PC-9 (cell line): ENCODE measurements at regions of chr2 and their contacts with region 1.

Region 1: GRCh38 chr2:44981136-44982108 is 27.8 kb downstream of the SIX2 start:
- DNase-seq: peak; percentile 62 to 76
- H3K4me3 ChIP-seq: no peak overlapping the region
- H3K27ac ChIP-seq: no peak overlapping the region
- H3K4me1 ChIP-seq: no peaks in the 10 kb centered on the region
- H3K27me3 ChIP-seq: no peaks in the 10 kb centered on the region
- CTCF ChIP-seq: peak; percentile 96

Region 2: DNA sequence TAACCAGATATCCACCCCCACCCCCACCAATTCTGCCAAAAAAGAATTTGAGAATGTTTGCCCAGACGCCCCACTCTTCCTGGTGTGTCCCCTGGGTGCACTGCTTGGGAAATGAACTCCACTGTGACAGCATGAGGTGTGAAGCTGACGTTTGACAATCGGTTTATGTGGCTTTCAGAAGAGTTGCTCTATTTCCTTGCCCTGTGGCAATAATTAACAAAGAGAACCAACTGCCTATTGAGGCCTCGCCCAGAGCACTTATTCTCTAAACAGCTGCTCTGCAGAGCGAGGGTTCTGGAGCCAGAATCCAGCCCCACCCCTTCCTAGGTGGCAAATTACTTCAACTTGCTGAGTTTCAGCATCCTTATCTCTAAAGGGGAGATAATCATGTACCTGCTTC is 155.7 kb before region 1 on chr2:
- CTCF ChIA-PET with region 1: no interaction called
- POLR2A ChIA-PET with region 1: no interaction called
- intact Hi-C with region 1: no loop called
- DNase-seq: no peak
- H3K4me3 ChIP-seq: no peak overlapping the region
- H3K27ac ChIP-seq: no peak overlapping the region
- H3K4me1 ChIP-seq: no peaks in the 10 kb centered on the region
- H3K27me3 ChIP-seq: no peaks in the 10 kb centered on the region
- CTCF ChIP-seq: no peak

Region 3: DNA sequence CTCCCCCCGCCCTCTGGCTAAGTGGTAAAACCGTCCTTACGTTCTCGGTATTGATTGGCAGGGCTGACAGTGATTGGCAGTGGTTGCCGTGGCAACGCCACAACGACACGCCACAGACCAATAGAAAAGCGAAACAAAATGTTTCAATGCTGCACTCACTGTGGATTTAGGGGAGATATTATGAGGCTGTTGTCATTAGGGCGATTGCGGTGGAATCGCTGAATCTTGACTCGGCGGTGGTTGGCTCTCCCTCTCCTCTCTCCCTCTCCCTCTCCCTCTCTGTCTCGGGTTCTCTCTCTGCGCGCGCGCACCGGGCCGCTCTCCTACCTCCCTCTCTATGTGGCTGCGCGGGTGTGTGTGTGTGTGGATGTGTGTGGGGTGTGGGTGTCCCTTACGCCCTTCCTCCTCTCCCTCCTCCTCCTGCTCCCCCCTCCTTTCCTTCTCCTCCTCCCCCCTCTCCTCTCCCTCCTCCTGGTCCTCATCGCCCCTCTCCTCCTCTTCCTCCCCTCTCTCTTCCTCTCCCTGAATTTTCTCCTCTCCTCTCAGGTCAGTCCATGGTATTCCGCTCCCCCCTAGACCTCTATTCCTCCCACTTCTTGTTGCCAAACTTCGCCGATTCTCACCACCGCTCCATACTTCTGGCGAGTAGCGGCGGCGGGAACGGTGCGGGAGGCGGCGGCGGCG is 39.7 kb before region 1 on chr2 and contains the start of gene SIX3:
- CTCF ChIA-PET with region 1: no interaction called
- POLR2A ChIA-PET with region 1: no interaction called
- intact Hi-C with region 1: no loop called
- DNase-seq: peak; percentile 59 to 65
- H3K4me3 ChIP-seq: peak within 1 kb of the TSS; percentile 58
- H3K27ac ChIP-seq: no peak within 1 kb of the TSS
- H3K4me1 ChIP-seq: peaks cover 21% of the 10 kb centered on the region
- H3K27me3 ChIP-seq: no peaks in the 10 kb centered on the region
- CTCF ChIP-seq: no peak
- total RNA-seq, gene SIX3: 1.4 TPM in 2 replicates

Region 4: GRCh38 chr2:44964752-44965236 is 16.6 kb before region 1 on chr2:
- CTCF ChIA-PET with region 1: no interaction called
- POLR2A ChIA-PET with region 1: no interaction called
- intact Hi-C with region 1: no loop called
- DNase-seq: no peak
- H3K4me3 ChIP-seq: no peak overlapping the region
- H3K27ac ChIP-seq: no peak overlapping the region
- H3K4me1 ChIP-seq: no peaks in the 10 kb centered on the region
- H3K27me3 ChIP-seq: no peaks in the 10 kb centered on the region
- CTCF ChIP-seq: 0 out of 2 replicates have a peak, but pooled peaks have one; percentile 29

Region 5: GRCh38 chr2:45009303-45009927 is 28.0 kb after region 1 on chr2 and contains the start of gene SIX2:
- CTCF ChIA-PET with region 1: no interaction called
- POLR2A ChIA-PET with region 1: no interaction called
- intact Hi-C with region 1: loop called (anchors 1 kb)
- DNase-seq: peak; percentile 98 to 99
- H3K4me3 ChIP-seq: peak within 1 kb of the TSS; percentile 69
- H3K27ac ChIP-seq: no peak within 1 kb of the TSS
- H3K4me1 ChIP-seq: peaks cover 23% of the 10 kb centered on the region
- H3K27me3 ChIP-seq: no peaks in the 10 kb centered on the region
- CTCF ChIP-seq: no peak
- total RNA-seq, gene SIX2: 10.2 and 11.9 TPM in 2 replicates

Region 6: GRCh38 chr2:45237850-45238542 is 256.6 kb after region 1 on chr2:
- CTCF ChIA-PET with region 1: no interaction called
- POLR2A ChIA-PET with region 1: no interaction called
- intact Hi-C with region 1: loop called (anchors 5 kb)
- DNase-seq: peak; percentile 87 to 99
- H3K4me3 ChIP-seq: peak overlapping the region; percentile 5; the same call in 1 of the 2 replicates
- H3K27ac ChIP-seq: peak overlapping the region; percentile 63
- H3K4me1 ChIP-seq: peaks cover 48% of the 10 kb centered on the region
- H3K27me3 ChIP-seq: no peaks in the 10 kb centered on the region
- CTCF ChIP-seq: peak; percentile 74

Region 7: DNA sequence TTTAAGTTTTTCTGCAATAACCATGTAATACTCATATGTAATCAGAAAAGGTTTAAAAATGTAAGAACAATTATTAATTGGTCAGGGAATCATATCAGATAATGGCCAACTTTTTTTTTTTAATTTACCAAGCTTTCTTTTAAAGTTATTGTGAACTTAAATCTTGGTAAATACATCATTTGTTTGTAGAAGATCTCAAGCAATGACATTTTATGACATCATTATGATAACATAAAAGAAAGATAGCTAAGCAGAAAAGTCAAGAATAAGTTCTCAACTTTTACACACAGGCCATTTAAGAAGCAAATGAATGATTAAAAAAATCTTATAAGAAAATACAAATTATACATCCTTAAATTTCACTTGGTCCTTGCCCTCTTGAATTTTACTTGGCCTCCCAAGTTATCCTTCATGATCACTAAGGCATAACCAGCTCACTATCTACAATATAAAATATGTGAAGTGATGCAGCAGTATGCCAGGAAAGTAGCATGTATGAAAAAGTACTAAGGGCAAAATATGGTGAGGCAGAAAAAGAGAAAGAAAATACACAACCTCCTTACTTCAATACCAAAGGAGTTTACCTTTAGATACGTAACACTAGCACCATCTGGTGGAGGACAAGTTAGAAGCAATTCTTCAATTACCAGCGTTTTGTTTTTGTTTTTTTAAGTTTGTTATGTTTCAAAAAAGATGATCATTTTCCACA is 513.0 kb after region 1 on chr2:
- CTCF ChIA-PET with region 1: interaction called, 13 read pairs
- POLR2A ChIA-PET with region 1: no interaction called
- intact Hi-C with region 1: loop called (anchors 1 kb)
- DNase-seq: peak; percentile 17 to 68
- H3K4me3 ChIP-seq: no peak overlapping the region
- H3K27ac ChIP-seq: no peak overlapping the region
- H3K4me1 ChIP-seq: no peaks in the 10 kb centered on the region
- H3K27me3 ChIP-seq: no peaks in the 10 kb centered on the region
- CTCF ChIP-seq: peak; percentile 96

Region 8: DNA sequence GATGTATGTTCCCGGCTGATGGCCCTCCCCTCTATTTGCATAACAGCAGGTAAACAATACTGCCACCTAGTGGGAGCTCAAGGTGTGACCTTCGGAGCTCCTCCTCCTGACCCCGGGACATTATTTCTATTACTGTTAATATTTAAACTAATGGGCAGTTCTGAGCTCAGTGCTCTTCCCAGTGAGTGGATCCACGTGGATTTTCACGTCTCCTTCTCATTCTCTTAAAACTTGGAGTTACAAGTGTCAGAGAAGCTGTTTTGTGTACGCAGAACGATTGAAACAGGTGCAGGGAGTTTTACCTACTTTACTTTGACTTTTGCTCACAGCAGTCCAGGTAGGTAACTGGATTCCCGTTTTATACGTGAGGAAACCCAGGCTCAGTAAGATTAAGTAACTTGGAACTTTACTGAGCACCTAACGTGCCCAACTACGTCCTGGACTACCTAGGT is 797.3 kb after region 1 on chr2:
- CTCF ChIA-PET with region 1: no interaction called
- POLR2A ChIA-PET with region 1: no interaction called
- intact Hi-C with region 1: loop called (anchors 2 kb)
- DNase-seq: peak; percentile 67 to 68
- H3K4me3 ChIP-seq: no peak overlapping the region
- H3K27ac ChIP-seq: no peak overlapping the region
- H3K4me1 ChIP-seq: no peaks in the 10 kb centered on the region
- H3K27me3 ChIP-seq: no peaks in the 10 kb centered on the region
- CTCF ChIP-seq: peak; percentile 97